A549 (cell line): ENCODE measurements at regions of chr7 and their contacts with region 1.

Region 1: GRCh38 chr7:42192851-42193461 is 44.1 kb downstream of the GLI3 start:
- DNase-seq: no peak
- ATAC-seq: no peak
- H3K4me3 ChIP-seq: no peak overlapping the region
- H3K27ac ChIP-seq: no peak overlapping the region
- H3K4me1 ChIP-seq: no peaks in the 10 kb centered on the region
- CTCF ChIP-seq: no peak
- EP300 ChIP-seq: no peak
- POLR2A ChIP-seq: no peak
- RAD21 ChIP-seq: no peak

Region 2: DNA sequence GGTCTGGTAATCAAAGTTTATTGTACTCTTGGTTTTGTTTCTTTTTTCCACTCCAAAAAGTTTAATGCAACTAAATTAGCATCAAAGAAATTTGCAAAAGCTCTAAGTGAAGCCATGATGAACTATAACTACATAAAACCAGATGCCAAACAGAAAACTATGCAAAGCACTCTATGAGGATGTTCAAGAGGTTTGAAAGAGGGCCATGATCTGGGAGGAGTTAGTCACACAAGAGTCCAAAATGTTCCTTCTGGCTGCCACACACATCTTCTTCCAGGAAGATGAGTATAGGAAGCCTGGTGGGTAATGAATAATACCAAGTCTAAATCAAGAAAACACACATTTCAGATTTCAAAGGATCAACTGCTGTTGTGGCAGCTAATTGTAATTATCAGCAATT is 15.6 kb after region 1 on chr7:
- CTCF ChIA-PET with region 1: no interaction called
- POLR2A ChIA-PET with region 1: interaction called, 10 read pairs
- DNase-seq: no peak
- ATAC-seq: no peak
- H3K4me3 ChIP-seq: no peak overlapping the region
- H3K27ac ChIP-seq: no peak overlapping the region
- H3K4me1 ChIP-seq: no peaks in the 10 kb centered on the region
- CTCF ChIP-seq: no peak
- EP300 ChIP-seq: no peak
- POLR2A ChIP-seq: no peak
- RAD21 ChIP-seq: no peak